Gastrocnemius medialis (tissue), 4 donors: ENCODE measurements at regions of chr1 and their contacts with region 1.

Region 1: GRCh38 chr1:33072707-33073106 is 8.2 kb upstream of the AZIN2 start:
- DNase-seq: no peak
- ATAC-seq: no peak
- H3K4me3 ChIP-seq: no peak overlapping the region
- H3K27ac ChIP-seq: no peak overlapping the region
- H3K4me1 ChIP-seq: no peaks in the 10 kb centered on the region
- H3K27me3 ChIP-seq: no peaks in the 10 kb centered on the region
- CTCF ChIP-seq: no peak
- POLR2A ChIP-seq: no peak

Region 2: GRCh38 chr1:32861904-32862695 is 210.6 kb before region 1 on chr1:
- in situ Hi-C with region 1: no loop called
- intact Hi-C with region 1: no loop called
- DNase-seq: no peak
- ATAC-seq: no peak
- H3K4me3 ChIP-seq: no peak overlapping the region
- H3K27ac ChIP-seq: peak overlapping the region in 1 of 4 donors; percentile 38
- H3K4me1 ChIP-seq: peaks cover 32 to 79% of the 10 kb centered on the region in 2 donors
- H3K27me3 ChIP-seq: no peaks in the 10 kb centered on the region
- CTCF ChIP-seq: no peak
- POLR2A ChIP-seq: no peak

Region 3: GRCh38 chr1:32925403-32926162 is 147.1 kb before region 1 on chr1:
- in situ Hi-C with region 1: loop called in 2 of 4 experiments (anchors 10 kb)
- intact Hi-C with region 1: no loop called
- DNase-seq: no peak
- ATAC-seq: no peak
- H3K4me3 ChIP-seq: no peak overlapping the region
- H3K27ac ChIP-seq: no peak overlapping the region
- H3K4me1 ChIP-seq: peaks cover 0 to 4% of the 10 kb centered on the region in 2 donors
- H3K27me3 ChIP-seq: peaks cover 0 to 21% (median 6%) of the 10 kb centered on the region in 3 donors
- CTCF ChIP-seq: no peak
- POLR2A ChIP-seq: no peak